ENCODE measurements at regions of chr9 and their contacts with region 1.

Region 1: DNA sequence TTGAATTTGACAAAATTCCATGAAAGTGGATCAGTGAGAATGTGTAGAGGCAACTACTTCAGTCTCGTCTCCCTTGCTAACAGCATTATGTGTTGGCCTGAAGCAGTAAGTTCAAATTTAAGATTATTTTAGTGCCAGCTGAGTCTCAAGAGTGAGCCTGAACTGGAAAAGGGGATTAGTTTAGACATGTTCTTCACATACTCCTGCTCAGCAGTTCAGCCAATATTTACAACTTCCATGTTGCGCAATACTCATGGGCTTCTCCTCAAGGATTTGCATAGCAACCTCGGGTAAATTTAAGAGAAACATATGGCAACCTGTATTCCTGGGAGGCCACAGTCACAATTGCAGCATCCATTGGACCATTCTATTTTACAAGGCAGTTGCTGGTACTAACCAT is 553.8 kb downstream of the PTPRD start:
- DNase-seq: no peak
- ATAC-seq: no peak
- H3K4me3 Mint-ChIP-seq: no peak overlapping the region
- H3K27ac Mint-ChIP-seq: no peak overlapping the region
- H3K4me1 Mint-ChIP-seq: no peaks in the 10 kb centered on the region
- H3K27me3 Mint-ChIP-seq: no peaks in the 10 kb centered on the region
- CTCF ChIP-seq: no peak

Region 2: DNA sequence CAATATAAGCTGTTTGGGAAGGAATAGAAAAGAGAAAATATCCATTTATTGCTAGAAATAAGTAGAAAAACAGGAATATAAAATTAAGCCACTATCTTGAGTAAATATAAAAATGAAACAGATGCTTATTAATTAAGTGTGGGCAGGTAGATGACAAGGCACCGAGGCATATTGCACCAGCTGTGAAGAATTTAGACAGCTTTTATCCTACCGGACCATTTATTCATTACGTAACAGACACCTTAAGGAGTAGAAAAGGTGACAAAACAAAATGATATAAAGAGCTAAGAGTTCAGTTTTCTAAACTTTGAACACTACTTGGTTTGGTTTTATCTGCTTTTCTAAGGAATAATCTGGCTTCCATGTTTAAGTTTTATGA is 149.6 kb after region 1 on chr9:
- CTCF ChIA-PET with region 1: no interaction called
- POLR2A ChIA-PET with region 1: no interaction called
- intact Hi-C with region 1: no loop called
- DNase-seq: no peak
- ATAC-seq: peak; percentile 54
- H3K4me3 Mint-ChIP-seq: peak overlapping the region; percentile 81
- H3K27ac Mint-ChIP-seq: peak overlapping the region; percentile 68
- H3K4me1 Mint-ChIP-seq: peaks cover 14% of the 10 kb centered on the region
- H3K27me3 Mint-ChIP-seq: no peaks in the 10 kb centered on the region
- CTCF ChIP-seq: no peak

Region 3: DNA sequence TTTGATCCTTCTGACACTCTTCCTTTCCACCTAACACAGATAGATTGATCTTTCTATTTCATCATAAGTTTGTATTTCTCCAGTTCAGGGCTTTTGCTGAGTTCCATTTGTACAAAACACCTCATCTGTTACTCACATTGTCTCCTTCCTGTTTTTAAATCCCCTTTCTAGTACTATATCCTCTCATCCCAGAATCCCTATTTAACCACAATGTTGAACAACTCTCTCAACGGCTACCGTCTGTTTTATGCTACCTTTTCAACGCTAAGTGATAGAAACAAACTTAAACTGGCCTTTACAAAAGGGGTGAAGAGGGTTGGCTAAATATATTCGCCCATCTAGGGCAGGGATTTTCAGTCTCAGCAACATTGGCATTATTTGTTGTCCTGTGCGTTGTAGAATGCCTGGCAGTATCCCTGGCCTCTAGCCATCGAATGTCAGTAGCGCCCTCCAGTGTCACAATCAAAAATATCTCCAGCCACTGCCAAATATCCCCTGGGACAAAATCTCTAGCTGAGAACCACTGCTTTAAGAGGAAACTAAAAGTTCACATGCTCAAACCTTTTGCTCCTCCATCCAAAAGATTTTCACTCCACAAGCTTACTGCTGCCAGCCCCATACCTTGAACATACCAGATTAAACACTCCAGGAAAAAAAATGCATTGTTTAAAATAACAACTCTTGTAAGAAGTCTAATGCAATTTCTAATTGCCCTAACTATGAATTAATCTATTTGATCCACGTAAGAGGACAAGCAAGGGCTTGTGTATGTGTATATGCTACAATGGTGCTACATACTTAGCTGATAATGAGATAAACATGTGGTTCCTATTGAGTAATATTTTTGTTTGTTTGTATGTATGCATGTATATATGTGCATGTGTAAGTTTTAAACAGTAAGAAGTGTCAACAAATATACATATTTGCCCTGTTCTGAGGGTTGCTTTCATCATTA is 209.8 kb after region 1 on chr9:
- CTCF ChIA-PET with region 1: interaction called, 7 read pairs
- POLR2A ChIA-PET with region 1: no interaction called
- intact Hi-C with region 1: loop called (anchors 1 kb)
- DNase-seq: no peak
- ATAC-seq: peak; percentile 42
- H3K4me3 Mint-ChIP-seq: no peak overlapping the region
- H3K27ac Mint-ChIP-seq: no peak overlapping the region
- H3K4me1 Mint-ChIP-seq: no peaks in the 10 kb centered on the region
- H3K27me3 Mint-ChIP-seq: no peaks in the 10 kb centered on the region
- CTCF ChIP-seq: no peak